B cell (primary cell): ENCODE measurements at regions of chr9 and their contacts with region 1.

Region 1: GRCh38 chr9:124006448-124007118 is 5.0 kb upstream of the LHX2 start:
- DNase-seq: peak; percentile 56
- ATAC-seq: no peak
- H3K4me3 ChIP-seq: no peak overlapping the region
- H3K4me3 Mint-ChIP-seq: peak overlapping the region; percentile 8
- H3K27ac ChIP-seq: no peak overlapping the region
- H3K27ac Mint-ChIP-seq: peak overlapping the region; percentile 65
- H3K4me1 ChIP-seq: peaks cover 48 to 58% of the 10 kb centered on the region in 2 donors
- H3K4me1 Mint-ChIP-seq: peaks cover 42% of the 10 kb centered on the region
- H3K27me3 ChIP-seq: peaks cover 3 to 96% (median 88%) of the 10 kb centered on the region in 4 experiments
- H3K27me3 Mint-ChIP-seq: peaks cover 86% of the 10 kb centered on the region
- CTCF ChIP-seq: no peak

Region 2: GRCh38 chr9:124020520-124021384 is 14.2 kb after region 1 on chr9:
- CTCF ChIA-PET with region 1: interaction called, 3 read pairs
- POLR2A ChIA-PET with region 1: interaction called, 7 read pairs
- intact Hi-C with region 1: loop called (anchors 1 kb)
- DNase-seq: peak; percentile 67
- ATAC-seq: peak; percentile 56
- H3K4me3 ChIP-seq: peak overlapping the region in 1 of 5 experiments; percentile 12
- H3K4me3 Mint-ChIP-seq: peak overlapping the region; percentile 35
- H3K27ac ChIP-seq: no peak overlapping the region
- H3K27ac Mint-ChIP-seq: no peak overlapping the region
- H3K4me1 ChIP-seq: peaks cover 48 to 62% of the 10 kb centered on the region in 2 donors
- H3K4me1 Mint-ChIP-seq: peaks cover 43% of the 10 kb centered on the region
- H3K27me3 ChIP-seq: peaks cover 0 to 95% (median 82%) of the 10 kb centered on the region in 4 experiments
- H3K27me3 Mint-ChIP-seq: peaks cover 77% of the 10 kb centered on the region
- CTCF ChIP-seq: no peak